ENCODE measurements at regions of chr14 and their contacts with region 1.

Region 1: DNA sequence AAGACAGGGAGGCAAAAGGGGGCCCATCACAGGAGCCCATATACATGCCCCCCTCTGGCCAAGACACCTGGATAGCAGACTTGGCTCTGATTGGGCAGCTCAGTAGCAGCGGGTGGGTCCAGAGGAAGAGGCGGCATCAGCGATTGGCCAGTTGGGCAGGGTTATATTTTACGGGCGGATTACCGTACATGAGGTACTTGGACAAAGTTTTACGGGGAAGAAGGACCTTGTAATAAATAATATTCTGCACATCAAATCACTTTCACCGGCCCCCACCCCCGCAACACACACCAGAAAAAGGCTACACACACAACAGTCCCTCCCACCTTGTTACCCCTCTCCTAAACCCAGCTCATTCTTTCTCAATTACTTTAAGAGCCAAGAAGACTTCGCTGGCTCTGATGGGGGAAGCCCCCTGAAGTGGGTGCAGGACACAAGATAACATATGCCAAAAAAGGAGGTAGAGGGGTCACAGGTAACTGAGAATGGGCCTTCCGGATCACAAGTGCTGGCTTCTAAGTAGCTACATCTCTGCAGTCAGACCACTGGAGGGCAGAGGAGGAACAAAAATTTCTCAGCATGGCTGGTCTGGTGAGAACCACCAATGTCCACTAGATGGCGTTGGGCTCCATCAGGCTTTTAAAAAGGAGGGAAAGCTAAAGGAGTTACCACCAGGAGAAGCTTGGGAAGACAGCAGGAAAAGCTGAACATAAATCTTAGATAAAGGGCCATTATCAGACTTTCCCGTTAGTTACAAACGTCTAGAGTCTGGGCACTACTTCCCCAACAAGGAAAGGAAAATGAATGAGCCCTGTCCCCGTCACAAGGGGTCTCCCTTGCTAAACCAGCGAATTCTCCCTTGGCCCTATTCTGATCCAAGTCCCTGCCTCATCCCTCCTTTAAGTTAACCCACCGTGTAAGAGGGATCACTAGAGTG is 11.4 kb upstream of the CDH24 start:
- DNase-seq: peak; percentile 67
- ATAC-seq: peak; percentile 91
- H3K4me3 ChIP-seq: no peak overlapping the region
- H3K27ac ChIP-seq: no peak overlapping the region
- H3K4me1 ChIP-seq: peaks cover 11% of the 10 kb centered on the region; the same call in 1 of the 2 replicates
- H3K27me3 ChIP-seq: no peaks in the 10 kb centered on the region
- CTCF ChIP-seq: peak; percentile 97 to 100 (median 99)
- EP300 ChIP-seq: no peak
- POLR2A ChIP-seq: no peak
- RAD21 ChIP-seq: peak; percentile 62

Region 2: DNA sequence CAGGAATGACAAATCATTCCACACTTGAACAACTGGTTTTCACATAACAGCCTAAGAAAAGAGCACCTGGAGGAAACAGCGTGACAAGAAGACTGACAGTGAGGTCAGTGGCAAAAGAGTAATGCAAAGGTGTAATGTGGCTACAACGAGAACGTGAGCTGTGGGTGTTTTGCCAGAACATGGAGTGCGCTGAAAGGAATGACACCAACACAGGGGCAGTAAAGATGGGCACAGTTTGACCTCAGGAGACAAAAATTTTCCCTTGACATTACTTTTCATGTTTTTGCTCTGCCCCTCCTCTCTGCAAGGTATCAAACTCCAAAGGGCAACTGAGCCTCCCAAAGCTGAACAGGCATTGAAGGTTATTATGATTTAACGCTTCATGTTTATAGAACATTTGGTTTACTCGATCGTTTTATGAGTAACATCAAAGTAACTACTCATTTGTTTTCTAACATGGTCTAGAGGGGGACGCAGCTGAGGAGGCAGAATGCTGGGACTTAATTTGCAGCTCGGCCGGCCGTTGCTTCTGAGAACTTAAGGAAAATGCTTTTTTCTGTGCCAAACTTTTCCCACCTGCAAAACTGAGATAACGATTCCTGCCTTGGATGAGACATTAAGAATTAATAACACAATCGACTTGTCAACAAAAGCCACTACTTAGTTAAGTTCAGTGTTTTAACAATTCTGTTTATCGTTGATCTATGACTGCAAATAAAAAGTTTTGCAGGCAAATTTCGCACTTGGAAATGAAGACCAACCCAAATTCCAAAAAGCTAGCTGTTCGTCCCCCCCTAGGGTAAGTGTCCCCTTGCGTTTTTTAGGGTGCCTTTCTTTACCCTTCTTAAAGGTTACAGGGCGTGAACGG is 112.8 kb before region 1 on chr14:
- CTCF ChIA-PET with region 1: interaction called, 11 read pairs
- POLR2A ChIA-PET with region 1: no interaction called
- RAD21 ChIA-PET with region 1: interaction called, 4 read pairs
- SMC1A ChIA-PET with region 1: interaction called, 7 read pairs
- in situ Hi-C with region 1: no loop called
- intact Hi-C with region 1: no loop called
- DNase-seq: no peak
- ATAC-seq: no peak
- H3K4me3 ChIP-seq: peak overlapping the region; percentile 85
- H3K27ac ChIP-seq: peak overlapping the region; percentile 90
- H3K4me1 ChIP-seq: no peaks in the 10 kb centered on the region
- H3K27me3 ChIP-seq: no peaks in the 10 kb centered on the region
- CTCF ChIP-seq: no peak
- EP300 ChIP-seq: no peak
- POLR2A ChIP-seq: no peak
- RAD21 ChIP-seq: no peak

Region 3: GRCh38 chr14:22994762-22995275 is 73.9 kb before region 1 on chr14:
- CTCF ChIA-PET with region 1: interaction called, 37 read pairs
- POLR2A ChIA-PET with region 1: interaction called, 3 read pairs
- RAD21 ChIA-PET with region 1: interaction called, 16 read pairs
- SMC1A ChIA-PET with region 1: interaction called, 10 read pairs
- in situ Hi-C with region 1: no loop called
- intact Hi-C with region 1: no loop called
- DNase-seq: no peak
- ATAC-seq: peak; percentile 94
- H3K4me3 ChIP-seq: no peak overlapping the region
- H3K27ac ChIP-seq: no peak overlapping the region
- H3K4me1 ChIP-seq: no peaks in the 10 kb centered on the region
- H3K27me3 ChIP-seq: no peaks in the 10 kb centered on the region
- CTCF ChIP-seq: peak; percentile 65 to 75 (median 67)
- EP300 ChIP-seq: no peak
- POLR2A ChIP-seq: no peak
- RAD21 ChIP-seq: peak; percentile 64

Region 4: DNA sequence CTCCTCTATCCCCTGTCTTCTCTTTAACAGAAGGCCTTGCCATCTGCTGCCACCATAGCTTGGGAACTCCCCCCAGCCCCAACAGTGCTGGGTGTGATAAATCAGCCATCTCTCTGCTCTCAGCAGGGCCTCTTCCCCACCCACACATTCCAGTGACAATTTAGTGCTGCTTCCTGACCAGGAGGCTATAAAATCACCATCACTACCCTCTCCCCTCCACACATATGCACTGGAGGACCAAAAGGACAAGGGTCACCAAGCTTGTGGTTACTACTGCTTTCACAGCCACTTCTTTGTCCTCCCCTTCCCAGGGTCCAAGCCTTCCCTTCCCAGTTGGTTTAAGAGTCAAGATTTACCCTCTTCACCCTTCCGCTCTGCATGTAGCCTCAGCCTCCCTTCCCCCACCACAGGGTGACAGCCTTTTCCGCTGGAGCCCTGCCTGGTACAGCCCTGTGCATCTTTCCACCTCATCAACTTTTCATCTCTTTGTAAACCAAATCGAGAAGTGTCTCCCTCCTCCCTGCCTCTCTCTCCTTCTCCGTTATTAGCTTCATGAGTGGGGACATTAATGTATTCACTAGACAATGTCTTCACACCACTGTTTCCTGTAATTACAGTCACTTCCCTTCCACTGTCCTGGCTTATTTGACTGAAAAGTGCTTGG is 43.5 kb before region 1 on chr14:
- CTCF ChIA-PET with region 1: interaction called, 16 read pairs
- POLR2A ChIA-PET with region 1: no interaction called
- RAD21 ChIA-PET with region 1: interaction called, 3 read pairs
- SMC1A ChIA-PET with region 1: no interaction called
- in situ Hi-C with region 1: no loop called
- intact Hi-C with region 1: no loop called
- DNase-seq: no peak
- ATAC-seq: peak; percentile 52; the same call in 2 of the 3 replicates
- H3K4me3 ChIP-seq: no peak overlapping the region
- H3K27ac ChIP-seq: no peak overlapping the region
- H3K4me1 ChIP-seq: no peaks in the 10 kb centered on the region
- H3K27me3 ChIP-seq: no peaks in the 10 kb centered on the region
- CTCF ChIP-seq: no peak
- EP300 ChIP-seq: no peak
- POLR2A ChIP-seq: no peak
- RAD21 ChIP-seq: no peak

Region 5: GRCh38 chr14:23085458-23085857 is 16.7 kb after region 1 on chr14:
- CTCF ChIA-PET with region 1: interaction called, 80 read pairs
- POLR2A ChIA-PET with region 1: interaction called, 4 read pairs
- RAD21 ChIA-PET with region 1: no interaction called
- SMC1A ChIA-PET with region 1: interaction called, 11 read pairs
- in situ Hi-C with region 1: no loop called
- intact Hi-C with region 1: no loop called
- DNase-seq: no peak
- ATAC-seq: no peak
- H3K4me3 ChIP-seq: no peak overlapping the region
- H3K27ac ChIP-seq: no peak overlapping the region
- H3K4me1 ChIP-seq: no peaks in the 10 kb centered on the region
- H3K27me3 ChIP-seq: no peaks in the 10 kb centered on the region
- CTCF ChIP-seq: no peak
- EP300 ChIP-seq: no peak
- POLR2A ChIP-seq: no peak
- RAD21 ChIP-seq: no peak

Region 6: GRCh38 chr14:23120541-23121251 is 52.0 kb after region 1 on chr14:
- CTCF ChIA-PET with region 1: interaction called, 28 read pairs
- POLR2A ChIA-PET with region 1: no interaction called
- RAD21 ChIA-PET with region 1: interaction called, 14 read pairs
- SMC1A ChIA-PET with region 1: interaction called, 20 read pairs
- in situ Hi-C with region 1: no loop called
- intact Hi-C with region 1: no loop called
- DNase-seq: peak; percentile 60
- ATAC-seq: peak; percentile 96
- H3K4me3 ChIP-seq: no peak overlapping the region; the same call in 1 of the 2 replicates
- H3K27ac ChIP-seq: peak overlapping the region; percentile 24; the same call in 1 of the 2 replicates
- H3K4me1 ChIP-seq: peaks cover 20% of the 10 kb centered on the region
- H3K27me3 ChIP-seq: no peaks in the 10 kb centered on the region; a peak in 2 of 4 replicates
- CTCF ChIP-seq: peak; percentile 100; a peak in 5 of 6 replicates
- EP300 ChIP-seq: no peak
- POLR2A ChIP-seq: no peak
- RAD21 ChIP-seq: peak; percentile 93

Region 7: DNA sequence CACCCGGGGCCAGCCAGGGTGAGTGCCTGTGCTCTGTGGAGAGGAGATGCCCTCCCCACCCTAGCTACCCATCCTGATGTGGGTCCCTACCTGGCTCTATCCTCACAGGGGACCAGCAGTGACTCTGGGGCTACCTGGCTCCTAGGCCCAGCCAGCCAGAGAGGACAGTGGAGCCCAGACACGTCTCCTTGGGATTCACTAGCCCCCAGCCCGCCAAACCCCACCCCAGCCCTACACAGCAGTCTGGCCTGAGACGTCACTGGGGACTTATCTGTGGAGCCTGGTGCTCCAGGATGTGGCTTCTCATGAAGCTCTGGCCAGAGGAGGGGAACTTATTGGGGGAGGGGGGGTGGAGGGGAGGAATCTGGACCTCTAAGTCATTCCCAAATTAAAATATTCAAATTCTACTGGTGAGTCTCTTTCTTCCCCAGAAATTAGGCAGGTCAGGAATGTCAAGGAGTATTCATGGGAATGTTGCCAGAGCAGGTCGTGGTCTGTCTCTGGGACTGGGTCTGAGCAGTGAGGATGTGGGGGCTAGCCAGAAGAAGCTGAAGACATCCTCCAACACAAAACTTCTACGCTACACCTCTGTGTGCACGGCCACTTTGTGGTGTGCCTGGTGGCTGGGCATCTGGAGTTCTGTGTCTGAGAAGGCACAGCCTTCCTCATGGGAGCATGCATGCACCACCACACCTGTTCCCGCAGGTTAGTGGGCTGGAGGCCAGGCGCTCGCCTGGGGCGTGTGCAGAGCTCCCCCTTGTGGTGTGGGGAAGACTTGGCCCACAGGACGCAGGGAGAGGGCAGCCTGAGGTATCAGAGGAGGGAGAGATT is 310.8 kb after region 1 on chr14:
- CTCF ChIA-PET with region 1: interaction called, 11 read pairs
- POLR2A ChIA-PET with region 1: no interaction called
- RAD21 ChIA-PET with region 1: interaction called, 5 read pairs
- SMC1A ChIA-PET with region 1: no interaction called
- in situ Hi-C with region 1: no loop called
- intact Hi-C with region 1: no loop called
- DNase-seq: peak; percentile 3
- ATAC-seq: peak; percentile 96
- H3K4me3 ChIP-seq: no peak overlapping the region
- H3K27ac ChIP-seq: no peak overlapping the region
- H3K4me1 ChIP-seq: no peaks in the 10 kb centered on the region
- H3K27me3 ChIP-seq: no peaks in the 10 kb centered on the region; a peak in 1 of 4 replicates
- CTCF ChIP-seq: peak; percentile 92 to 97 (median 95); a peak in 5 of 6 replicates
- EP300 ChIP-seq: no peak
- POLR2A ChIP-seq: no peak
- RAD21 ChIP-seq: peak; percentile 87